ENCODE measurements at regions of chr5 and their contacts with region 1.

Region 1: GRCh38 chr5:151150471-151151262 is 6.9 kb downstream of the ANXA6 start:
- DNase-seq: peak; percentile 87
- ATAC-seq: peak; percentile 64
- H3K4me3 Mint-ChIP-seq: peak overlapping the region; percentile 46
- H3K27ac Mint-ChIP-seq: peak overlapping the region; percentile 89
- H3K4me1 Mint-ChIP-seq: peaks cover 94% of the 10 kb centered on the region
- H3K27me3 Mint-ChIP-seq: no peaks in the 10 kb centered on the region

Region 2: GRCh38 chr5:151063142-151063949 is 87.3 kb before region 1 on chr5:
- CTCF ChIA-PET with region 1: interaction called, 3 read pairs
- POLR2A ChIA-PET with region 1: interaction called, 3 read pairs
- intact Hi-C with region 1: loop called in 1 of 2 experiments (anchors 2 kb)
- DNase-seq: no peak
- ATAC-seq: no peak
- H3K4me3 Mint-ChIP-seq: no peak overlapping the region
- H3K27ac Mint-ChIP-seq: peak overlapping the region; percentile 87
- H3K4me1 Mint-ChIP-seq: peaks cover 96% of the 10 kb centered on the region
- H3K27me3 Mint-ChIP-seq: no peaks in the 10 kb centered on the region

Region 3: DNA sequence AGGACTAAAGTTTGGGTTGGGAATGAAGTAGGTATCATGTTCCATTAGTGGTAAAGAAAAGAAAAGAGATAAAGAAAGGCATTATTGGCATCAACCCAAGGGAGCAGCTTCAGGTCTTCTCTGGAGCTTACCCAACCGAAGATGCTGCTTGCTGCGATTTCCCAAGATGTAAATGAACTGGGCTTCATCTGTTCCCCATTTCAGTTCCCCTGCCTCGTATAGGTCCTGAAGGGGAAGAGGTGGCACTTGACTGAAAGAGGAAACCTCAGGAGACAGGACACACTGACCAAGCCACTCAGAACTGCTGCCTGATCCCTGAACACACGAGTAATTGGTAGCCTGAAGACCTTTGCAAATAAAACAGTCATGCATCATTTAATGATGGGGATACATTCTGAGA is 17.7 kb before region 1 on chr5:
- CTCF ChIA-PET with region 1: interaction called, 216 read pairs
- POLR2A ChIA-PET with region 1: interaction called, 10 read pairs
- intact Hi-C with region 1: no loop called
- DNase-seq: no peak
- ATAC-seq: no peak
- H3K4me3 Mint-ChIP-seq: no peak overlapping the region
- H3K27ac Mint-ChIP-seq: no peak overlapping the region
- H3K4me1 Mint-ChIP-seq: peaks cover 59% of the 10 kb centered on the region
- H3K27me3 Mint-ChIP-seq: no peaks in the 10 kb centered on the region

Region 4: DNA sequence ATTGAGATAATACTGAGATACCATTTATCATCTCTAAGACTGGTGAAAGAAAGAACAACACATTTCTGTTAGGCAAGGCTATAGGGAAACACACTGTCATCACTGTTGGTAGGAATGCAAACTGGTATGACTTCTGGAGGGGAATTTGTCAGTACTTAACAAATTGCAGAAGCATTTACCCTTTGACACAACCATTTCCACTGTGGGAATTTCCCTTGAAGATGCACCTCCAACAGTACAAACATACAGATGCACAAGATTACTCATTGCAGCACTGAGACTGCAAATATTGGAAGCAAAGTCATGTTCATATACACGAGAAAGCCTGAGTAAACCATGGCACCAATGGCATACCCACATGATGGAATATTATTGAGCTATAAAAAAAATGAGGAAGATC is 119.9 kb after region 1 on chr5:
- CTCF ChIA-PET with region 1: no interaction called
- POLR2A ChIA-PET with region 1: no interaction called
- intact Hi-C with region 1: loop called in 1 of 2 experiments (anchors 1 kb)
- DNase-seq: peak; percentile 16
- ATAC-seq: peak; percentile 97
- H3K4me3 Mint-ChIP-seq: no peak overlapping the region
- H3K27ac Mint-ChIP-seq: no peak overlapping the region
- H3K4me1 Mint-ChIP-seq: no peaks in the 10 kb centered on the region
- H3K27me3 Mint-ChIP-seq: no peaks in the 10 kb centered on the region